ENCODE measurements at regions of chr10 and their contacts with region 1.

Region 1: GRCh38 chr10:80382989-80383388 is 25.4 kb upstream of the PRXL2A start:
- DNase-seq: peak; percentile 73
- ATAC-seq: peak; percentile 64
- H3K4me3 Mint-ChIP-seq: no peak overlapping the region
- H3K27ac Mint-ChIP-seq: peak overlapping the region; percentile 37
- H3K4me1 Mint-ChIP-seq: peaks cover 14% of the 10 kb centered on the region
- H3K27me3 Mint-ChIP-seq: no peaks in the 10 kb centered on the region
- CTCF ChIP-seq: peak; percentile 74

Region 2: DNA sequence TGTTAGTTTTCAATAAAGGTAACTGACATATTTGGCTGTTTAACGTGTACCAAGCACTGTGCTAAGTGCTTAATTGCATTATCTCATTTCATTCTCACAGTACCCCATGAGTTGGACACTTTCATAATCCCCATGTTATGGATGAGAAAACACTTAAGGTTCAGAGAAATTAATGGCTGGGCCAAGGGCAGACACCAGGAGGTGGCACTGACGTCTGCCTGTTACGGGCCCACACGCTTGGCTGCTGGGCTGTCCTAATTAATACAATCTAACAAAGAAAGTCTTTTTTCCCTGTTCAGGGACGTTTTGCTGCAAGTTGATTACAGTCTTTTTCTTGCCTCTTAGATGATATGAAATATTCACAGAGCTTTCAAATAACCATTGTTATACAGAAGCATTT is 10.3 kb before region 1 on chr10:
- CTCF ChIA-PET with region 1: interaction called, 20 read pairs
- POLR2A ChIA-PET with region 1: interaction called, 3 read pairs
- intact Hi-C with region 1: no loop called
- DNase-seq: no peak
- ATAC-seq: no peak
- H3K4me3 Mint-ChIP-seq: no peak overlapping the region
- H3K27ac Mint-ChIP-seq: no peak overlapping the region
- H3K4me1 Mint-ChIP-seq: no peaks in the 10 kb centered on the region
- H3K27me3 Mint-ChIP-seq: peaks cover 3% of the 10 kb centered on the region
- CTCF ChIP-seq: no peak

Region 3: GRCh38 chr10:80437231-80437630 is 54.2 kb after region 1 on chr10:
- CTCF ChIA-PET with region 1: interaction called, 44 read pairs
- POLR2A ChIA-PET with region 1: no interaction called
- intact Hi-C with region 1: no loop called
- DNase-seq: no peak
- ATAC-seq: no peak
- H3K4me3 Mint-ChIP-seq: no peak overlapping the region
- H3K27ac Mint-ChIP-seq: no peak overlapping the region
- H3K4me1 Mint-ChIP-seq: no peaks in the 10 kb centered on the region
- H3K27me3 Mint-ChIP-seq: no peaks in the 10 kb centered on the region
- CTCF ChIP-seq: no peak

Region 4: DNA sequence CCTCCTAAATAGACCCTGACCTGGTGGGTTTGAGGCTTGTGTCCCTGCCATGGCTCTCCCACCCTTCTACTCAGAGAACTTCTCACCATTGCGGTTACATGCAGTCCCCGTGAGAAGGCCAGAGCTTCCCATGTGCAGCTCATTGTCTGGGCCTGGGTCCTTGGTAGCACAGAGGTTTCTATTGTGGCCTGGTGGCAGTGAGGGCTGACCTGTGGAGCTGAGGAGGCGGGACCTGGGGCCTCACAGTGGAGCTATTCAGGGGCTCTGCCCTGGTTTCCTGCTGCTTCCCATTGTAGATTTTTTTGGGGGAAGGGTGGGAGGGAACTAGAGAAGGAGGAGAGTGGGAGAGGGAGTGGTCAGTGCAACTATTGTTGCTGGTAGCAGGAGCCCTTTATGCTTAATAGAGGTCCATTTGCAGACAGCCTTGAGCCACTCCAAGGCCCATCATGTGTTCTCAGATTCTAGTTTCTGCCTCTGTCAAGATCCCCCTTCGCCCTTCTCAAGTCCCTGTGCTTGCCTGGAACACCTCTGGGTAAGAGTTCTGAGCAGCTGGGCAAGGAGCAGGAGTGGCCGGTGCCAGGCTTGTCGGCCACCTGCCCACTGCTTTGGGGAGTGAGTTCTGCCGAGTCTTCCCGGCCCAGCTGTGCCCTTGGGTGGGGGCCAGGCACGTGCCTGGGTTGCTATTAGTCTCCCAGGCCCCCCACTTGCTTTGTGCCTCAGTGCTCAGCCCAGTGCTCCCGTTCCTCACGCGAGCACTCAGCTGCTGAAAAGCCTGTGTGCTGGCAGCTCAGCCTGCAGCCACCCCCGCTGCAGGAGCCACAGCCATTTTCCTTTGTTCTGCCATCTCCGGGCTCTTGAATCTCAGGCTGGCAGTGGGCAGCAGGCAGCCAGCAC is 81.8 kb after region 1 on chr10:
- CTCF ChIA-PET with region 1: interaction called, 13 read pairs
- POLR2A ChIA-PET with region 1: no interaction called
- intact Hi-C with region 1: no loop called
- DNase-seq: peak; percentile 60
- ATAC-seq: no peak
- H3K4me3 Mint-ChIP-seq: peak overlapping the region; percentile 71
- H3K27ac Mint-ChIP-seq: peak overlapping the region; percentile 97
- H3K4me1 Mint-ChIP-seq: peaks cover 94% of the 10 kb centered on the region
- H3K27me3 Mint-ChIP-seq: no peaks in the 10 kb centered on the region
- CTCF ChIP-seq: no peak

Region 5: GRCh38 chr10:80530251-80530650 is 147.3 kb after region 1 on chr10:
- CTCF ChIA-PET with region 1: interaction called, 16 read pairs
- POLR2A ChIA-PET with region 1: no interaction called
- intact Hi-C with region 1: no loop called
- DNase-seq: peak; percentile 78
- ATAC-seq: peak; percentile 90
- H3K4me3 Mint-ChIP-seq: peak overlapping the region; percentile 27
- H3K27ac Mint-ChIP-seq: peak overlapping the region; percentile 85
- H3K4me1 Mint-ChIP-seq: peaks cover 65% of the 10 kb centered on the region
- H3K27me3 Mint-ChIP-seq: no peaks in the 10 kb centered on the region
- CTCF ChIP-seq: peak; percentile 47

Region 6: DNA sequence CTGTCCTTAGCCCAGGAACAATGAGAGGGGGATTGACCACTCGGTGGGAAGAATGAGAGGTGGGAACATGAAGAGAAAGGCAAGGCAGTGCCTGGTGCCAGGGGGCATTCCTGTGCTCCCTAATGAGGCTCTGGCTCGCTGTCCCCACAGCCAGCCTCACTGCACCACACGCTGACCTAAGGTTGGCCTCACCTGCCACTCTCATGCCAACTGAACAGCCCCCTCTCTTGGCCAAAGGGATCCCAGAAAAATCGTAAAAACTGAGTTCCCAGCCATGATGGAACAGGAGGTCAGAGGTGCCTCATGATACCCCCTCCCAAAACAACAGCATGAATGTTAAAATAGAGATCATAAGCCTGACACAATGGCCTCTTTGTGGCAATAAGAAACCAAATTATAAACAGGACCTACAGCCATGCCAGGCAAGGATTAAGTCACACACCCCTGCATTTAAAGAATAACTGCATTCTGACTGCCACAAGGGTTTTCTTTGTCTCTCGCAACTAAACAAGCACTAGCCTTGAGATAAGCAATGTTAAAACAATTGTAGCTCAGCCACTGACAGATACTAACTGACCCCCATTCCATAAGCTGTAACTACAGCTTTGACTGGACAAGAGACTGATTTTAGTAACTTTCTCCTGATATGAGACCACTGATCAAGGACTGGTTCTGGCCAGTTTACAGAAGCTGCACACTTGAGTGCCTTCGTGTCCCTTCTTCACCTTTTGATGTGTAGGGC is 303.9 kb after region 1 on chr10:
- CTCF ChIA-PET with region 1: no interaction called
- POLR2A ChIA-PET with region 1: no interaction called
- intact Hi-C with region 1: no loop called
- DNase-seq: no peak
- ATAC-seq: no peak
- H3K4me3 Mint-ChIP-seq: no peak overlapping the region
- H3K27ac Mint-ChIP-seq: no peak overlapping the region
- H3K4me1 Mint-ChIP-seq: no peaks in the 10 kb centered on the region
- H3K27me3 Mint-ChIP-seq: peaks cover 8% of the 10 kb centered on the region
- CTCF ChIP-seq: no peak

Region 7: DNA sequence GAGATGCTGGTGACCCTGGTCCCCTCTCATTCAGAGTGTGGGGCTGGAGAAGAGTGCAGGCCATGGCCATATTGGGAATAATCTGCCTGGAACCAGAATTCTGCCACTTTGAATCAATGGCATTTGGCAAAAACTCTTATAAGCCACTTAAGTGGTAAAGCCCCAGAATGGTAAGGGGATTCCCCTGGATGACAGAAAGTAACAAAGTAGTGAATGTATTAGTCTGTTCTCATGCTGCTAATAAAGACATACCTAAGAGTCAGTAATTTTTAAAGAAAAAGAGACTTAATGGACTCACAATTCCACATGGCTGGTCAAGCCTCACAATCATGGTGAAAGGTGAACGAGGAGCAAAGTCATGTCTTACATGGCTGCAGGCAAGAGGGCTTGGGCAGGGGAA is 403.3 kb after region 1 on chr10:
- CTCF ChIA-PET with region 1: no interaction called
- POLR2A ChIA-PET with region 1: no interaction called
- intact Hi-C with region 1: no loop called
- DNase-seq: no peak
- ATAC-seq: no peak
- H3K4me3 Mint-ChIP-seq: no peak overlapping the region
- H3K27ac Mint-ChIP-seq: no peak overlapping the region
- H3K4me1 Mint-ChIP-seq: no peaks in the 10 kb centered on the region
- H3K27me3 Mint-ChIP-seq: peaks cover 7% of the 10 kb centered on the region
- CTCF ChIP-seq: no peak

Measured in activated CD8-positive, alpha-beta T cell treated with anti-CD3 and anti-CD28 coated beads for 36 hours (primary cell).